ENCODE measurements at regions of chr2 and their contacts with region 1.

Region 1: DNA sequence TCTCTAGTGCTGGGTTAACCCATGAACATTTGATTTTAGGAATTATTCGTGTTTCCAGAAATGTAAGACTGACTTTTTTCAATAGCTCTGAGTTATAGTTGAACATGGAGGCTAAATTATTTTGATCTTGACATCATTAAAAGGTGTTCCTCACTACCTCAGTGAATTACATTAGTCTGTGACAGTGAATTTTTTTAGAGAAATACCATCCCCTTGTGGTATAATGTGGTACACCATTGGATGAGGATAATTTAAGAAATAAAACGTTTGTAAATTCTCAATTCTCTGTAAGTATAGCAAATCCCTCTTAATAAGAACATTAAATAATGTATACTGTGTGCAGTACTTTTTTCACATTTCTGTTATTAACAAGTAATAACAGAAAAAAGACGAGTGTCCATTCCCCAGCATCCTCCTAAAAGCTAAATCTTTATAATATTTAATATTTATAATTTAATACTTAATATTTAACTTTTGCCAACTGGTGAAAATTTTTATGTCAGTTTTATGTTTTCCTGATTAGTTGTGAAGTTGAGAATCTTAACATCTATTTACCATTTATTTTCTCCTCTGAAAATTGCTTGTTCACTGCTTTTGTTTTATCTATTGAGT is 70.3 kb upstream of the CWC22 start:
- DNase-seq: no peak
- H3K4me3 ChIP-seq: no peak overlapping the region
- H3K27ac ChIP-seq: no peak overlapping the region
- H3K4me1 ChIP-seq: no peaks in the 10 kb centered on the region
- H3K27me3 ChIP-seq: no peaks in the 10 kb centered on the region
- CTCF ChIP-seq: peak; percentile 64

Region 2: GRCh38 chr2:179842498-179843153 is 234.8 kb before region 1 on chr2:
- intact Hi-C with region 1: loop called (anchors 10 kb)
- DNase-seq: no peak
- H3K4me3 ChIP-seq: no peak overlapping the region
- H3K27ac ChIP-seq: no peak overlapping the region
- H3K4me1 ChIP-seq: no peaks in the 10 kb centered on the region
- H3K27me3 ChIP-seq: peaks cover 11% of the 10 kb centered on the region
- CTCF ChIP-seq: peak; percentile 43